ENCODE measurements at regions of chr1 and their contacts with region 1.

Region 1: GRCh38 chr1:40363721-40364120 is 9.8 kb upstream of the SMAP2 start:
- DNase-seq: peak; percentile 73
- H3K4me3 ChIP-seq: no peak overlapping the region
- H3K27ac ChIP-seq: no peak overlapping the region
- H3K4me1 ChIP-seq: peaks cover 13% of the 10 kb centered on the region
- CTCF ChIP-seq: peak; percentile 69

Region 2: DNA sequence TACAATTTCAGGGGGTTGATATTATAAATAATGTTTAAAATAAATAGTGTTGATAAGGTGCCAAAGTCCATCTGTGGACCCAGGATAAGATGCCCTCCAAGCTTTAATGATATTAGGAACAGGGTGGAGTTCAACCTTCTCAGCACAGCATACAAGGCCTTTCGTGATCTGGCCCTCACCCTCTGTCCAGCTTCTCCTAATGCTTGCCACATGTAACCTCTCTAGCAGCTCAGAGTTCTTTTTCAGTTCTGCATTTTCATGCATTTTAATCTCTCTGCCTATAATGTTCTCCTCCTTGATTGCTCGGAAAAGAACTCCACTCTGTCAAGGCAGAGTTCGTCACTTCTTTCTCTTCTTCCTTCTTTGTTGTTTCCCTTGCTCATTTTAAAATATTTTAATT is 11.6 kb before region 1 on chr1:
- CTCF ChIA-PET with region 1: no interaction called
- POLR2A ChIA-PET with region 1: interaction called, 28 read pairs
- intact Hi-C with region 1: no loop called
- DNase-seq: peak; percentile 67
- H3K4me3 ChIP-seq: no peak overlapping the region
- H3K27ac ChIP-seq: peak overlapping the region; percentile 42
- H3K4me1 ChIP-seq: peaks cover 52% of the 10 kb centered on the region
- CTCF ChIP-seq: no peak